MCF 10A (cell line): ENCODE measurements at regions of chr16 and their contacts with region 1.

Region 1: GRCh38 chr16:53372992-53373871 is 61.0 kb upstream of the RBL2 start:
- DNase-seq: peak; percentile 62
- H3K4me3 Mint-ChIP-seq: peak overlapping the region; percentile 76
- H3K27ac Mint-ChIP-seq: no peak overlapping the region
- H3K4me1 Mint-ChIP-seq: peaks cover 16% of the 10 kb centered on the region
- H3K27me3 Mint-ChIP-seq: no peaks in the 10 kb centered on the region
- CTCF ChIP-seq: no peak

Region 2: GRCh38 chr16:53429221-53429943 is 56.1 kb after region 1 on chr16:
- CTCF ChIA-PET with region 1: no interaction called
- POLR2A ChIA-PET with region 1: interaction called, 85 read pairs
- intact Hi-C with region 1: no loop called
- DNase-seq: peak; percentile 60
- H3K4me3 Mint-ChIP-seq: peak overlapping the region; percentile 26
- H3K27ac Mint-ChIP-seq: no peak overlapping the region
- H3K4me1 Mint-ChIP-seq: peaks cover 15% of the 10 kb centered on the region
- H3K27me3 Mint-ChIP-seq: no peaks in the 10 kb centered on the region
- CTCF ChIP-seq: no peak